ENCODE measurements at regions of chr16 and their contacts with region 1.

Region 1: GRCh38 chr16:55471448-55472097 is 7.4 kb upstream of the MMP2 start:
- DNase-seq: peak; percentile 60
- H3K4me3 ChIP-seq: no peak overlapping the region; the same call in 1 of the 2 replicates
- CTCF ChIP-seq: no peak

Region 2: GRCh38 chr16:55453909-55454308 is 17.7 kb before region 1 on chr16:
- CTCF ChIA-PET with region 1: no interaction called
- POLR2A ChIA-PET with region 1: no interaction called
- DNase-seq: no peak
- H3K4me3 ChIP-seq: no peak overlapping the region
- CTCF ChIP-seq: no peak

Region 3: GRCh38 chr16:55508941-55509931 is 37.7 kb after region 1 on chr16 and contains the start of gene LPCAT2:
- CTCF ChIA-PET with region 1: interaction called, 44 read pairs
- POLR2A ChIA-PET with region 1: interaction called, 10 read pairs
- DNase-seq: no peak
- H3K4me3 ChIP-seq: peak within 1 kb of the TSS; percentile 77
- CTCF ChIP-seq: no peak

Region 4: DNA sequence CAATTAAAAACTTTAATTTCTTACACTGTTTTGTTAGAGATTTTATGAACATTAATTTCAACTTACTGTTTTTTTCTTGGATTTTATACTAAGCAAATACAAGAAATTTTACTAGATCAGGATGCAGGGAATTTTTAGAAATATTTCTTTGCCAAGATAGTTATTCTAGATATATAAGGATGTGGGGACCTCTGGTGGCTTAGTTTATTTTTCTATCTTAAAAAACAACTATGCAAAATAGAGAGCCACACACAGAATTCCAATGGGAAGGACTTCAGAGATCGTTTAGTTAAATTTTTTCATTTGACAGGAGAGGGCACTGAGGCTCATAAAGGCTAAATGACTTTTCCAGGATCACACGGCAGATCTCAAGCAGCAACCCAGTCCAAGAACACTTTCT is 71.9 kb after region 1 on chr16:
- CTCF ChIA-PET with region 1: interaction called, 232 read pairs
- POLR2A ChIA-PET with region 1: no interaction called
- DNase-seq: no peak
- H3K4me3 ChIP-seq: no peak overlapping the region
- CTCF ChIP-seq: no peak

Measured in AG04449 (cell line).